ENCODE measurements at regions of chr17 and their contacts with region 1.

Region 1: GRCh38 chr17:13002766-13003451 is 14.9 kb downstream of the ELAC2 start:
- DNase-seq: peak; percentile 71
- ATAC-seq: no peak
- H3K4me3 Mint-ChIP-seq: no peak overlapping the region
- H3K27ac Mint-ChIP-seq: no peak overlapping the region
- H3K4me1 Mint-ChIP-seq: no peaks in the 10 kb centered on the region
- H3K27me3 Mint-ChIP-seq: no peaks in the 10 kb centered on the region

Region 2: DNA sequence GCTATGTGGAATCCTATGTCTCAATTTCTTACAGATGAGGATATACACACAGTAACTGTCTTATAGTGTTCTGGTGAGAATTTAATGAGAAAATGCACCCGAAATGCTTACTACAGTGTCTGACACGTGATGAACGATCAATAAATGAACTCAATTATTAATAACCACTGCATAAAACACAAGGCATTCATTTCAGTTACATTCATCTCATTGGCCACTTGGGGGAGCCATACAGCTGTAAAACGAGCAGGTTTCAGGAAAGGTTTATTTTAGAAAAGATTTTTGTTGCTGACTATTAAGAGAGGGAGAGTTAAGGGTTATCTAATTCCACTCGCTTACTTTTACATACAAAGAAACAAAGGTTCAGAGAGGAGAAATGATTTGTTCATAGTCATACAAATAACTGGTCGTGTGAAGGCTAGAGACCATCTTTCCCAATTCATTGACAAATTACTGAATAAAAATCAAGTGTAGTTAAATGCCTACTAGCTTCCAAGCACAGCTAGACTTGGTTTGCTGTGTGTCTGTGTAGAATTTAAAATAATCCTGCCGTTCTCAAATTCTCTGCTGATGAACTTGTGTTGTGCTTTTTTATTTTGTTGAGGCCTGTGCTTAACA is 822.2 kb before region 1 on chr17:
- CTCF ChIA-PET with region 1: interaction called, 3 read pairs
- POLR2A ChIA-PET with region 1: no interaction called
- intact Hi-C with region 1: loop called (anchors 2 to 10 kb)
- DNase-seq: peak; percentile 38
- ATAC-seq: no peak
- H3K4me3 Mint-ChIP-seq: no peak overlapping the region
- H3K27ac Mint-ChIP-seq: no peak overlapping the region
- H3K4me1 Mint-ChIP-seq: no peaks in the 10 kb centered on the region
- H3K27me3 Mint-ChIP-seq: peaks cover 3% of the 10 kb centered on the region

Region 3: GRCh38 chr17:12342609-12343435 is 660.1 kb before region 1 on chr17:
- CTCF ChIA-PET with region 1: no interaction called
- POLR2A ChIA-PET with region 1: no interaction called
- intact Hi-C with region 1: loop called in 1 of 2 experiments (anchors 10 kb)
- DNase-seq: peak; percentile 32
- ATAC-seq: no peak
- H3K4me3 Mint-ChIP-seq: no peak overlapping the region
- H3K27ac Mint-ChIP-seq: no peak overlapping the region
- H3K4me1 Mint-ChIP-seq: no peaks in the 10 kb centered on the region
- H3K27me3 Mint-ChIP-seq: no peaks in the 10 kb centered on the region

Region 4: GRCh38 chr17:12545877-12546513 is 456.9 kb before region 1 on chr17:
- CTCF ChIA-PET with region 1: no interaction called
- POLR2A ChIA-PET with region 1: no interaction called
- intact Hi-C with region 1: loop called in 1 of 2 experiments (anchors 5 kb)
- DNase-seq: peak; percentile 19
- ATAC-seq: no peak
- H3K4me3 Mint-ChIP-seq: no peak overlapping the region
- H3K27ac Mint-ChIP-seq: no peak overlapping the region
- H3K4me1 Mint-ChIP-seq: no peaks in the 10 kb centered on the region
- H3K27me3 Mint-ChIP-seq: no peaks in the 10 kb centered on the region

Region 5: GRCh38 chr17:13044572-13045065 is 41.7 kb after region 1 on chr17:
- CTCF ChIA-PET with region 1: no interaction called
- POLR2A ChIA-PET with region 1: no interaction called
- intact Hi-C with region 1: no loop called
- DNase-seq: no peak
- ATAC-seq: no peak
- H3K4me3 Mint-ChIP-seq: no peak overlapping the region
- H3K27ac Mint-ChIP-seq: no peak overlapping the region
- H3K4me1 Mint-ChIP-seq: no peaks in the 10 kb centered on the region
- H3K27me3 Mint-ChIP-seq: peaks cover 12% of the 10 kb centered on the region

Measured in activated CD4-positive, alpha-beta T cell treated with anti-CD3 and anti-CD28 coated beads for 36 hours (primary cell).